Dorsolateral prefrontal cortex (tissue), 120 donors: ENCODE measurements at regions of chr7 and their contacts with region 1.

Region 1: DNA sequence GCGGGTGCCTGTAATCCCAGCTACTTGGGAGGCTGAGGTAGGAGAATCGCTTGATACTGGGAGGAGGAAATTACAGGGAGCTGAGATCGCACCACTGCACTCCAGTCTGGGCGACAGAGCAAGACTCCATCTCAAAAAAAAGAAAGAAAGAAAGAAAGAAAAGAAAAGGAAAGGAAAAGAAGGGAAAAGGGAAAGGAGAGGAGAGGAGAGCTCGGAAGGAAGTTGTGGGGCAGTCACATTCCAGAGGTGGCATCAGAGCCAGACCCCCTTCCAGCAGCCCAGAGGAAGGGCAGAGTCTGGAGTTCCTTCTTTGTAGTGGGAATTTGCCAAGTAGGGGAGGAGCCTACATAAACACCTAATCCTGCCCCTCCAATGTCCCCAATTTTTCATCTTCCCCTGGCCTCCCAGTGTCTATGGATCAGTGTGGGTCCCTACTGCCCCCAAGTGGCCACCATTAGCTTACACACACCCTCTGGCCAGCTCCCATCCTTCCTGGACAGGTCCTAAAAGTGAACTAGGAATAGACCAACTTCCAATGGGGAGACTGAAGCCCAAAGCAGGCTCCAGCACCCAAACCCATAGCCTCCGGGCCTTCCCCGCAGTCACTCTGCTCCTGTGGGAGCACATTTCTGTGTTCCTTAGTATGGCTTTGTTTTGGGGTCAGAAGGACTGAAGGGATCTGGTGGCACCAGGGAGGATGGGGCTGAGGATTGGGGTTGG is 39.6 kb upstream of the HSPB1 start:
- DNase-seq: peak in 9 of 10 donors; percentile 33 to 83 (median 66)
- H3K4me3 ChIP-seq: no peak overlapping the region
- H3K27ac ChIP-seq: no peak overlapping the region
- H3K27me3 ChIP-seq: peaks cover 0 to 21% (median 7%) of the 10 kb centered on the region in 45 donors
- CTCF ChIP-seq: peak; percentile 22 to 84 (median 70)

Region 2: GRCh38 chr7:76155938-76156337 is 106.9 kb before region 1 on chr7:
- intact Hi-C with region 1: no loop called
- DNase-seq: no peak
- H3K4me3 ChIP-seq: no peak overlapping the region
- H3K27ac ChIP-seq: no peak overlapping the region
- H3K27me3 ChIP-seq: no peaks in the 10 kb centered on the region
- CTCF ChIP-seq: no peak

Region 3: DNA sequence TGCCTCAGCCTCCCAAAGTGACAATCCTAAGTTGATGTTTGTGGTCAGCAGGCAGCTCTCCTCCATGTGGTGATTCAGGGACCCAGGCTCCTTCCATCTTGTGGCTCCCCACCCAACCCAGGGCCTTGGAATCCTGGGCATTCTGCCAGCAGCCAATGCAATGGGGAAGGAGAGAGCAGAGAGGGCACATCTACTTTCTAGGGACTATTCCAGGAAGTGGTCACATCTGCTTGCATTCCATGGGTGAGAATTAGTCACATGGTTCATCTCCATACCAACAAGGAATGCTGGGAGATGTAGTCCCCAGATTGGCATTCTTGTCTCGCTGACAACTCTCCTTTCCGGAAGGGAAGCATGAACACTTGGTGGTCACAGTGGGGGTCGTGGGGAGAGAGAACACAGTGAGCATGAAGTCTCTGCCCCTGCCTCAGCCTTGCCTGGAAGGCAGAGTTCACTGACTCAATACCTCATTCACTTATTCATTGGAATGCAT is 71.0 kb before region 1 on chr7:
- intact Hi-C with region 1: loop called in 1 of 2 experiments (anchors 5 kb)
- DNase-seq: no peak
- H3K4me3 ChIP-seq: no peak overlapping the region
- H3K27ac ChIP-seq: no peak overlapping the region
- H3K27me3 ChIP-seq: no peaks in the 10 kb centered on the region
- CTCF ChIP-seq: no peak

Region 4: DNA sequence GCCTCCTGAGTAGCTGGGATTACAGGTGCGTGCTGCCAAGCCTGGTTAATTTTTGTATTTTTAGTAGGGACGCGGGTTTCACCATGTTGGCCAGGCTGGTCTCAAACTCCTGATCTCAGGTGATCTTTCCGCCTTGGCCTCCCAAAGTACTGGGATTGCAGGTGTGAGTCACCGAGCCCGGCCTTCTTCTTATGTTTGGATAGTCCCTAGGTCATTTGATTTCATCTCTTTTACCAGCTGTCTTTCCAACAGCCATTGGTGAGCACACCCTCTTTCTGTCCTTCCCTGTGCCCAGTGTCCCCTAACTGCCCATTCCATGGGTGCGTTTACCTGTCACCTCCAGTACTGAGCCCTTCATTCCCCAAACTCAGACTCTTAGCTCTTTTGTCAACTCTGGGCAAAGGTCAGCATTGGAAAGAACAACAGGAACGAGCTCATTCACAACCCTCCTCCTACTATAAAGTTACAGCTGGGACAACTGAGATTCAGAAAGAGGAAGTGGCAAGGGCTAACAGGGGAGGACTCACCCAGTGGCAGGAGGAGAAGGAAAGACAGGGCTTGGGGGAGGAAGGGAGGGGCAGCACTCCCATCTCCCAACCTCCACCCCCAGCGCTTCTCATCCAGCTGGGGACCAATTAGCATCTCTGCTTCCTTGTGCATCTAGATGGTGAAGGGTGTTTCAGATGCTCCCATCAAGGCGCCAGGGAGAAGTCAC is 141.1 kb after region 1 on chr7:
- intact Hi-C with region 1: no loop called
- DNase-seq: no peak
- H3K4me3 ChIP-seq: no peak overlapping the region
- H3K27ac ChIP-seq: no peak overlapping the region
- H3K27me3 ChIP-seq: no peaks in the 10 kb centered on the region
- CTCF ChIP-seq: no peak